Activated naive CD4-positive, alpha-beta T cell treated with anti-CD3 and anti-CD28 coated beads for 36 hours (primary cell): ENCODE measurements at regions of chr18 and their contacts with region 1.

Region 1: GRCh38 chr18:63161761-63162195 is 157.8 kb downstream of the BCL2 start:
- DNase-seq: peak; percentile 94
- H3K4me3 Mint-ChIP-seq: peak overlapping the region; percentile 74
- H3K27ac Mint-ChIP-seq: peak overlapping the region; percentile 99
- H3K4me1 Mint-ChIP-seq: peaks cover 93% of the 10 kb centered on the region
- H3K27me3 Mint-ChIP-seq: no peaks in the 10 kb centered on the region

Region 2: GRCh38 chr18:62844850-62845643 is 316.7 kb before region 1 on chr18:
- CTCF ChIA-PET with region 1: no interaction called
- intact Hi-C with region 1: loop called (anchors 1 kb)
- DNase-seq: peak; percentile 57
- H3K4me3 Mint-ChIP-seq: no peak overlapping the region
- H3K27ac Mint-ChIP-seq: peak overlapping the region; percentile 24
- H3K4me1 Mint-ChIP-seq: peaks cover 24% of the 10 kb centered on the region
- H3K27me3 Mint-ChIP-seq: no peaks in the 10 kb centered on the region

Region 3: GRCh38 chr18:63175264-63175663 is 13.5 kb after region 1 on chr18:
- CTCF ChIA-PET with region 1: interaction called, 4 read pairs
- intact Hi-C with region 1: loop called (anchors 1 kb)
- DNase-seq: no peak
- H3K4me3 Mint-ChIP-seq: no peak overlapping the region
- H3K27ac Mint-ChIP-seq: peak overlapping the region; percentile 14
- H3K4me1 Mint-ChIP-seq: peaks cover 61% of the 10 kb centered on the region
- H3K27me3 Mint-ChIP-seq: no peaks in the 10 kb centered on the region

Region 4: DNA sequence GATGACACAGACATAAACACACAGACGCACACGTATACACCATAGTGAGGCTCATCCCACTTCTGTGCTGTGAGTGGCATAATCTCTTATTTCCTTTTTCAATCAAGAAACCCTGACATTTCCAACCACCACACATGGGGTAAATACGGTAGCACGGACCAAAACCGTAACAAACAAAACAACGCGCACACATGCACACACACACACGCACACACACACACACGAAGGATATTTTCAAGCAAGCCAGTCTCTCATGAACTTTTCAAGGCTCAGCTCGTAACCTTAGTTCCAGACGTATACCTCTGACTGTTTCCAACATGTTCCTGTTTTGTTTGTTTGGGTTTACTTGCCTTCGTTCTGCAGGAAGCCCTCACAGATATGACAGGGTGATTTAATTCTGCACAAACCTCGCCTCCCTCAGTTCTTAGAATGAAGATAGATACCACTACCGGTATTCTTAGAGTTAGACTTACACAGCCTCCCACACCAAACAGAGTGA is 38.0 kb after region 1 on chr18:
- CTCF ChIA-PET with region 1: interaction called, 4 read pairs
- intact Hi-C with region 1: loop called (anchors 1 kb)
- DNase-seq: peak; percentile 54
- H3K4me3 Mint-ChIP-seq: no peak overlapping the region
- H3K27ac Mint-ChIP-seq: no peak overlapping the region
- H3K4me1 Mint-ChIP-seq: peaks cover 30% of the 10 kb centered on the region
- H3K27me3 Mint-ChIP-seq: no peaks in the 10 kb centered on the region

Region 5: DNA sequence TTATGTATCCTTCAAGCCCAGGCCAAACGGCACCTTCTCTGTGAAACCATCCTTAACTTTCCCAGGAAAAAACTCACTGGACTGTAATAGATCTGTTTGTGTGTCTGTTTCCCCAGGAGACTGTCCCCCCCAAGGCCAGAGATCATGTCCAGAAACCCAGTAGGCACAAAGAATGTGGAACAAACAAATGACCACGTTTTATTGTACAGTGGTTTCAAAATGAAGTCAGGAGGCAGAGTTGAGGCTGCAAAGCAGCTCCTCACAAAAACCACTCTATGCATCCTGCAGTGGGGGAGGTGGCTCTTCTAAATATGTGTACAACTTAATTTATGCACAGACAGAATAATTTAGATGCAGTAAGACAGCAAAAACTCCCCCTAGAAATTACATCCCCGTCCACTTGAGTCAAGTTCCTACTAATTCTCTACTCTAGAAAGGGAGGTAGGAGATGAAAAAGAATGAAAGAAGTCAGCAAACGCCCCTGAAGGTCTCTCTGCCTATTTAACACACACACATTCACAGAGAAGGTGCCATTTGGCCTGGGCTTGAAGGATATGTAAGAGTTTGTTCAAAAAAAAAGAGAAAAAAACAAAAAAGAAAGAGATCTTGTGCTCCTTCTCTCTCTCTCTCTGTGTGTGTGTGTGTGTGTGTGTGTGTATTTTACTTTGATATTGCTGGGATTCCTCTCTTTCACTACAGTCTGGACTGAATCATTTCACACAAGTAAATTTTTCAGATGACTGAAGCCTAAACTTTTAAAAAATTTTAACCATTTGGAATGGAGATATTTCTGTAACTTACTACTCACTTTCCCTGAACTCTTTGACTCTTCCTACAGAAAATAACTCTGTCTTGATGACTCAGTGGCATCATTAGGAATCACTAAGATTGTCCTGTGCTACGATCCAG is 138.3 kb after region 1 on chr18:
- CTCF ChIA-PET with region 1: no interaction called
- intact Hi-C with region 1: loop called (anchors 1 kb)
- DNase-seq: peak; percentile 72
- H3K4me3 Mint-ChIP-seq: peak overlapping the region; percentile 17
- H3K27ac Mint-ChIP-seq: peak overlapping the region; percentile 86
- H3K4me1 Mint-ChIP-seq: peaks cover 73% of the 10 kb centered on the region
- H3K27me3 Mint-ChIP-seq: no peaks in the 10 kb centered on the region

Region 6: DNA sequence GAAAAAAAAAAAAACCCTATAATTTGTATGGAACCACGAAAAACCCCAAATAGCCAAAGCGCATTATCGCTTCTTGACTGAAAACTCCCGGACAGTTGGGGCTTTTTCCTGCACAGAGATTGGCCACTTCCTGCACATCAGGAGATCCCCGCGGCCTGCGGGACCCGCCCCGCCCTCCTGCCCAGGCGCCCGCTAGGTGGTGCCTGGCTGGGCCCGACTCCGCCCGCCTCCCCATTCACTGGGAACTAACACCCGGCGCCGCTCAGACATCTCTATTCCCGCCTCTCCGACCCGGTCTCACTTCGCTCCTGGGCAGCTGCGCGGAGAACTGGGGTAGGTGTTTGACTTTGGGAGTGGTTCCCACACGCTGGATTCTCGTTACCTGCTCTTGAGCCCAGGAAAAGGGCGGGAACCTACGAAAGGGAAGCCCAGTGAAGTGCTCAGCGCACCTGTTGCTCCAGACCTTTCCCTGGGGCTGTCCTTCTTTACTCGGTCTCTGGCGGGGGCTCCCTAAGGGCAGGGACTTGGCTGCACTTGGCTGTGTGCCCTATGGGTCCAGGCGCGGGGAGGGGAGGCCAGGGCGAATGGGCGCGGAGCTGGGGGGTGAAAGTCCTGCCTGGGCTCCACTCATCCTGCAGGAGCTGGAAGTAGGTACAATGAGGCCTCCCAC is 787.4 kb after region 1 on chr18 and contains the start of gene HMSD:
- CTCF ChIA-PET with region 1: no interaction called
- intact Hi-C with region 1: loop called (anchors 2 kb)
- DNase-seq: peak; percentile 89
- H3K4me3 Mint-ChIP-seq: peak within 1 kb of the TSS; percentile 82
- H3K27ac Mint-ChIP-seq: peak within 1 kb of the TSS; percentile 86
- H3K4me1 Mint-ChIP-seq: peaks cover 43% of the 10 kb centered on the region
- H3K27me3 Mint-ChIP-seq: peaks cover 26% of the 10 kb centered on the region
- total RNA-seq, gene HMSD: 25.0 to 31.7 TPM